GM18951 (cell line): ENCODE measurements at regions of chr1 and their contacts with region 1.

Region 1: DNA sequence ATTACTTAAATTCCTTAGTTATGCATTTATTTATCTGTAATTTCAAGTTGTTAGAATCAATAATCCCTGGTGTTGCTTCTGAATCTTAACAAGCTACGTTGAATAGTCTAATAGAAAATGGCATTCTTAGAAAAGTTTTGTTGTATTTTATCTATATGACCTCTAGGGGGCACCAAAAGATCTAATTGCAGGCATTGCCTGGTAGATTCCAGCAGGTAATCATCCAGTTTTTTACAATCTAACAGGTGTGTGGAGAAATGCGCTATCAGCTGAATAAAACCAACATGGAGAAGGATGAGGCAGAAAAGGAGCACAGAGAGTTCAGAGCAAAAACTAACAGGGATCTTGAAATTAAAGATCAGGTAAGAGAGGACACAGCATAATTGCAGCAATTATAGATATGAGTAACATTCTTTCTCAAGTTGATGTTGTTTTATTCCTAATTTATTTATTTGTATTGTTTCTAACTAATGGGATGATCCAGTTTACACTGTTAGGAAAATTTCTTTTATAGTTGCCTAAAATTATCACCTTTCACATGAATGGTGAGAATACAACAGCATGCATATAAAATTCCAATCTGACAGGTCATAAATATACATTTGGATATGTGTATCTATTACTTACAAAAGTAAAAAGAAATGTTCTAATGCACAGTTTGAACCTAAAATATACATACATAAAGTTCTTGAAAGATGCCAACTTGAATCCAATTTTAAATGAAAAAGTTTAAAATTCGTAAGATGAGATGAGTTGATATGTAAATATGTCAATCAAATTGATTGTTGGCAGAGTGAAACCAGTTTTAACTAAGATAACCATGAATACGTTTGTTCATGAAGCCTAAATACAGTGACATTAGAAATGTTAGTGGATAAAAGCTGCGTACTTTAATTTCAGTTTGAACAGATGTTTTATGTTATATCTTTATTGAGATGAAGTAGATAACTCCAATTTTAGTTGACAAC is 88.4 kb downstream of the SDCCAG8 start:
- POLR2A ChIP-seq: no peak

Region 2: DNA sequence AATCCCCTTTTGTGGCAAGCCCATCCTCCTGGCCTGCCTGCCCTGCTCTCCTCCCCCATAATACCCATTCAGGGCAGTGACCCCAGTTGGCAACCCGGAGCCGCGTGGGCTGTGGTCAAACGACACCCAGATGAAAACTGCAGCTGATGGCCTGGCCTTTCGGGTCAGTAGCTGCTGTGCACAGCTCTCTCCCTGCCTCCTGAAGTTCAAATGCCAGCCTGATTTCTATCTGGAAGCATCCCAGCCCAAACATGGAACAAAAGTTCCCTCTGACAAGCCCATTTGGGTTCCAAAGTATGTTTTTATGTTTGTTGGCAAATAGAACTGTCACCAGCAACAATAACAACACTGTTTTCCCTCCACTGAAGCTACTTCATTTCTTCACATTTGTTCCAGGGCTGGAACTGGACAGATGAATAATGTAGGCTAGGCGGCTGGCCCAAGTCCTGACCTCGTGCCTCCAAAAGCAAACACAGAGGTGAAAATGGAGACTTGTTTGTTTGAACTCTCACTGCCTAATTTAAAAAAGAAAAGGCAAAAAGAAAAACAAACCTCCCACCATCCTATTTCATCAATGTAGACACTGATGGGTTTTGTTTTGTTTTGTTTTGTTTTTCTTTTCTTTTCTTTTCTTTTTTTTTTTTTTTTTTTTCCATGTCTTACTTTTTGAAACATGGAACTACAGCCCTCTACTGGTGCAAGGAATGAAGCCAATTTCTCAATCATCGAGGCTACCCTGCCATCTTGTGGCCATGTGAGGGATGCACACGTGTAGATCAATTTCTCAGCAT is 928.4 kb after region 1 on chr1:
- in situ Hi-C with region 1: loop called (anchors 10 kb)
- POLR2A ChIP-seq: no peak